ENCODE measurements at regions of chr3 and their contacts with region 1.

Region 1: GRCh38 chr3:79086514-79086913 is 681.3 kb downstream of the ROBO1 start:
- DNase-seq: peak; percentile 68

Region 2: DNA sequence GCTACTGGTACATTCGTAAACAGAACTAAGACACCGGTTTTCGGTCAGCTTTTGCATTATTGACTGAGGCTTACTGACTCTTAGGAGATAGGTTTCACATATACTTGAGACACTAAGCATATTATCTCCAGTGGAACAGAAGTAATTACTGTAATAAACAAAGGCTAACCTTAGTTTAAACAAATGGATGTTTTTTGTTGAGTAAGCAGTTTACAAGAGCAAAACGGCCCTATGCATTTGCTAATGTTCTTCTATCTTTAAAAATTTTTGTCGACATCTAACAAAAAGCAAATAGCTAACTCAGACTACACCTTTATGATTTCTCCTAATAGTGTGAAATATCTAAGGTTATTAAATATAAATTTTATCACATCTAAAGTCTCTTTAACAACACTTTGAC is 16.8 kb after region 1 on chr3:
- CTCF ChIA-PET with region 1: interaction called, 12 read pairs
- POLR2A ChIA-PET with region 1: no interaction called
- DNase-seq: no peak

Region 3: GRCh38 chr3:79361748-79362378 is 275.3 kb after region 1 on chr3:
- CTCF ChIA-PET with region 1: interaction called, 11 read pairs
- POLR2A ChIA-PET with region 1: no interaction called
- DNase-seq: peak; percentile 26